ENCODE measurements at regions of chr6 and their contacts with region 1.

Region 1: DNA sequence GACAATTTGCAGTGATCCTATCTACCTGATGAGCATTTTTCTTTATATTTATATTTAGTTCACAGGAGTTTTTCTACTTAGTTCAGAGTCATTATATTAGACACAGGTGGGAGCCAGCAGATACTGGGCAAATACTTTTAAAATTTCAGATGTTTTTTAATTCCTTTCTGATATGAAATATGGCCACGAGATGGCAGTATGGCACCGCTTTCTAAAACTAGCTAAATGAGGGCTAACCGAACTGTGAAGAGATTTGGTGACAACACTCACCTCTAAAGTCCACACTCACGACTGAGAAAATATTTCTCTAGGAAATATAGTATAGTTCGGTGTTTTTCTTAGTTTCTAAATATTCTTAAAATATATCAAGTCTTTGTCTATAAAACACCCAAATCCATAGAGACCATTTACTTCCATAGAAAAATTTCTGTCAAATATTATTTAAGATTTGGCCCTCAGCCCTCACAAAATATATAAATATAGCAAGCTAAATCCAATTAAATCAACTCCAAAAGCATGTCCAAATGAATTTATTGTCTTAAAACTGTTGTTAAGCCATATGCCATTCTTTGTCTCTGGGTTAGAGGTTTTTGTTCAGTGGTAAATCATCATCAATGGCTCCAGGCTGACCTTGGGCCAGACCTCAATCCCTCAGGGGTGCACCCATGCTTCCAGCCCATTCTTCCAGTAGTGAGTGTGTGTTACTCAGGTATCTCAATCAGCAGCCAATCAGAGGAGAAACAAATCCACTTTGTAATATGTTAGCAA is 63.6 kb downstream of the HUS1B start:
- DNase-seq: peak; percentile 90
- H3K4me3 Mint-ChIP-seq: no peak overlapping the region
- H3K27ac Mint-ChIP-seq: peak overlapping the region; percentile 43
- H3K4me1 Mint-ChIP-seq: peaks cover 16% of the 10 kb centered on the region
- H3K27me3 Mint-ChIP-seq: no peaks in the 10 kb centered on the region

Region 2: GRCh38 chr6:259901-260508 is 333.3 kb before region 1 on chr6:
- intact Hi-C with region 1: no loop called
- DNase-seq: no peak
- H3K4me3 Mint-ChIP-seq: peak overlapping the region; percentile 10
- H3K27ac Mint-ChIP-seq: no peak overlapping the region
- H3K4me1 Mint-ChIP-seq: peaks cover 24% of the 10 kb centered on the region
- H3K27me3 Mint-ChIP-seq: no peaks in the 10 kb centered on the region

Region 3: DNA sequence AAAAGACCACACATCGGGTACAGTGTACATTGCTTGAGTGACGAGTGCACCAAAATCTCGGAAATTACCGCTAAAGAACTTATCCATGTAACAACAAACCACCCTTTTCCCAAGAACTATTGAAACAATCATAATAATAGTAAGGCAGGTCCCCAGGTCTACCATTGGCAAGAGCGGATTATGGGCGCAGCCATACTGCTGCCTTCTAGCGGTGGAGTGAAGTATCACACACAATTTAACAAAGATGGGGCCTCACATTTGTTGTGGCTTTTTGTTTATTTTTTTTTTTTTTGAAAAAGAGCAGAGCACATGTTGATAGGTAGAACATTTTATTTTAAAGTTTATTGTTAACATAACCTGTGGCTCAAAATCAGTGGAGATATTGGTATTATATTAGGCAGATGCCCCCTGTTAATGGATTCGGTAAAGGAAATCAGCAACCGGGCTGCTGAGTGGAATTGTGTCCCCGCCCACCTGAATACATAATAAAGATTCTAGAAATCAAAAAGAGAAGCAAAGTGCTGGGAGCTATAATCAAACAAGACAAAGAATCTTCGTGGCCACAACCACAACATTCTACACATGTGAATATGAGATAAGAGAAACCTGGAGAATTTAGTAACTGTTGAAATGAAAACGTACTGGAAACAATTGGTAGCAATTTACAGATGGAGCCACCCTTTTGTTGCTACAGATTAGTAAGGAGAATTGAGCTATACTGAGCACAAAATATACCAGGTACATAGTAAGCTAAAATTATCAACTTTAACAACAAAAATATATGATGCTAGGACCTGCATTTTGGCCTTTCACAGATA is 193.8 kb after region 1 on chr6:
- intact Hi-C with region 1: loop called (anchors 2 kb)
- DNase-seq: peak; percentile 68
- H3K4me3 Mint-ChIP-seq: no peak overlapping the region
- H3K27ac Mint-ChIP-seq: peak overlapping the region; percentile 81
- H3K4me1 Mint-ChIP-seq: peaks cover 16% of the 10 kb centered on the region
- H3K27me3 Mint-ChIP-seq: peaks cover 10% of the 10 kb centered on the region

Region 4: DNA sequence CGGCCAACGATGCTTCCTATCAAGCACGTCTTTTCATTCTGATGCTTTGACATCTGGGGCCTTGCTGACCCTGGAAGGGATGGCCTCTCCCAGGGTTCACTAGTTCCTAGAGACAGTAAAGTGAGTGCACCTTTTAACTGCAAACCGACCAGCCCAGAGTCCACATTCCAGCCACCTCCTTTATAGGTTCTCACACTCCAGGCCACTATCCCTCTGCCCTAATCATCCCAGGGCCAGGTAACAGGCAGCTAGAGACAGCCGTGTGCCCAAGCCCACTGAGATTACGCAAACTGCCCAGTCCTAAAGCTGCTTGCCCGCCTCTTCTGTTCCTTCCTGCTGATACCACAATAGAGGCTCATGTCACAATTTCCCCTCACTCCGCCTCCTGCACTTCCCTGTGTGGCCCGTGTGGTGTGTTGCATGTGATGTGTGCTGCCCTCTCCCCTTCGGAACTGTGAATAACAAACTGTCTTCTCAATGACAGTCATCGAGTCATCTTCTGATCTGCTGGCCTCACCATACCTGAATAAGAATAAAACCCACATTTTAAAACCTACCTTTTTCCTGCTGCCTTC is 223.3 kb after region 1 on chr6:
- intact Hi-C with region 1: no loop called
- DNase-seq: peak; percentile 66
- H3K4me3 Mint-ChIP-seq: no peak overlapping the region
- H3K27ac Mint-ChIP-seq: peak overlapping the region; percentile 13
- H3K4me1 Mint-ChIP-seq: peaks cover 18% of the 10 kb centered on the region
- H3K27me3 Mint-ChIP-seq: peaks cover 11% of the 10 kb centered on the region

Region 5: GRCh38 chr6:1396952-1397868 is 803.9 kb after region 1 on chr6:
- intact Hi-C with region 1: loop called (anchors 1 kb)
- DNase-seq: peak; percentile 91
- H3K4me3 Mint-ChIP-seq: no peak overlapping the region
- H3K27ac Mint-ChIP-seq: no peak overlapping the region
- H3K4me1 Mint-ChIP-seq: peaks cover 5% of the 10 kb centered on the region
- H3K27me3 Mint-ChIP-seq: peaks cover 54% of the 10 kb centered on the region